CD4-positive, alpha-beta T cell (primary cell): ENCODE measurements at regions of chr14 and their contacts with region 1.

Region 1: GRCh38 chr14:91244501-91244901 is at the start of gene GPR68:
- DNase-seq: peak in 6 of 14 experiments; percentile 26 to 70 (median 58)
- ATAC-seq: no peak
- H3K4me3 ChIP-seq: peak within 1 kb of the TSS; percentile 65
- H3K4me3 Mint-ChIP-seq: peak within 1 kb of the TSS; percentile 90
- H3K27ac ChIP-seq: peak within 1 kb of the TSS; percentile 97
- H3K27ac Mint-ChIP-seq: peak within 1 kb of the TSS; percentile 85
- H3K4me1 ChIP-seq: peaks cover 91% of the 10 kb centered on the region
- H3K4me1 Mint-ChIP-seq: peaks cover 95% of the 10 kb centered on the region
- H3K27me3 ChIP-seq: no peaks in the 10 kb centered on the region
- H3K27me3 Mint-ChIP-seq: no peaks in the 10 kb centered on the region
- CTCF ChIP-seq: no peak
- total RNA-seq, gene GPR68: 2.8 to 2.9 TPM

Region 2: DNA sequence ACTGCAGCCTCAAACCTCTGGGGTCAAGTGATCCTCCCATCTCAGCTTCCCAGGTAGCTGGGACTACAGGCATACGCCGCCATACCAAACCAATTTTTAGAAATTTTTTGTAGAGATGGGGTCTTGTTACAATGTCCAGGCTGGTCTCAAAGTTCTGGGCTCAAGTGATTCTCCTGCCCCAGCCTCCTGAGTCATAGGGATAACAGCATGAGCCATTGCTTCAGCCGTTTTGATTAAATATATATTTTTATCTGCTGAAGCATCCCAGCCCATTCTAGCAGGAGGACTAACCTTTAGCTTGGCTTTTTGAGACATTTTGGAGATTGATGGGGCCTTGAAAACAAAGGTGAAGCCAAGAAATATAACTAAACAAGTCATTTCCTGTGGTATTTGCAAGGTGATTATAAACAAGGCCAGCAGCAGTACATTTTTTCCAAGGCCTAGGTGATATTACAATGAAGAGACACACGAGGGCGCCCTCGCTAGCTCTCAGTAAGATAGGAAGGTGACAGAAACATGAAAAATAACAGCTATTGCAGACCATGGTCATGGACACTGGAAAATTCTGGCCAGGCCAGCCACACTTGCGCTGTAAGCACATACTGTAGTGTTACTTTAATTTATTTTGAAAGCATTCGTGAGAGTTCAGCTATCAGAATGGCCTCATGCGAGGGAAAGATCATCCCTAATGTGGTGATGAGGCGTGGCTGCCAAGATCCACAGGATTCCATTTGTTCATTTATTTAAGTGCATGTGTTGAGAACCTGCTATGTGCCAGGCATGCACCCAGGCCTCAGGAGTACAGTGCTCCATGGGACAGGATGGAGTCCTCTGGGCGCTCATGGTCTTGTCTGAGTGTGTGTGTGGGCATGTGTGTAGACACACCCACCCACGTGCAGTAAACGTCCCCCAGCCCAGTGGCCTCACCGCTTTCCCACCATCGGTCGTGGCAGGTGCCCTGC is 67.1 kb before region 1 on chr14:
- CTCF ChIA-PET with region 1: interaction called, 16 read pairs
- POLR2A ChIA-PET with region 1: interaction called, 25 read pairs
- intact Hi-C with region 1: no loop called
- DNase-seq: peak; percentile 47 to 89 (median 58)
- ATAC-seq: peak; percentile 93
- H3K4me3 ChIP-seq: no peak overlapping the region
- H3K4me3 Mint-ChIP-seq: no peak overlapping the region
- H3K27ac ChIP-seq: peak overlapping the region in 1 of 2 donors; percentile 40
- H3K27ac Mint-ChIP-seq: peak overlapping the region; percentile 47
- H3K4me1 ChIP-seq: peaks cover 17% of the 10 kb centered on the region
- H3K4me1 Mint-ChIP-seq: peaks cover 17% of the 10 kb centered on the region
- H3K27me3 ChIP-seq: no peaks in the 10 kb centered on the region
- H3K27me3 Mint-ChIP-seq: no peaks in the 10 kb centered on the region
- CTCF ChIP-seq: peak; percentile 91

Region 3: GRCh38 chr14:91193069-91193468 is 51.4 kb before region 1 on chr14:
- CTCF ChIA-PET with region 1: interaction called, 8 read pairs
- POLR2A ChIA-PET with region 1: interaction called, 10 read pairs
- intact Hi-C with region 1: loop called in 1 of 2 experiments (anchors 5 kb)
- DNase-seq: no peak
- ATAC-seq: no peak
- H3K4me3 ChIP-seq: no peak overlapping the region
- H3K4me3 Mint-ChIP-seq: no peak overlapping the region
- H3K27ac ChIP-seq: no peak overlapping the region
- H3K27ac Mint-ChIP-seq: no peak overlapping the region
- H3K4me1 ChIP-seq: peaks cover 15% of the 10 kb centered on the region
- H3K4me1 Mint-ChIP-seq: peaks cover 17% of the 10 kb centered on the region
- H3K27me3 ChIP-seq: no peaks in the 10 kb centered on the region
- H3K27me3 Mint-ChIP-seq: no peaks in the 10 kb centered on the region
- CTCF ChIP-seq: no peak

Region 4: DNA sequence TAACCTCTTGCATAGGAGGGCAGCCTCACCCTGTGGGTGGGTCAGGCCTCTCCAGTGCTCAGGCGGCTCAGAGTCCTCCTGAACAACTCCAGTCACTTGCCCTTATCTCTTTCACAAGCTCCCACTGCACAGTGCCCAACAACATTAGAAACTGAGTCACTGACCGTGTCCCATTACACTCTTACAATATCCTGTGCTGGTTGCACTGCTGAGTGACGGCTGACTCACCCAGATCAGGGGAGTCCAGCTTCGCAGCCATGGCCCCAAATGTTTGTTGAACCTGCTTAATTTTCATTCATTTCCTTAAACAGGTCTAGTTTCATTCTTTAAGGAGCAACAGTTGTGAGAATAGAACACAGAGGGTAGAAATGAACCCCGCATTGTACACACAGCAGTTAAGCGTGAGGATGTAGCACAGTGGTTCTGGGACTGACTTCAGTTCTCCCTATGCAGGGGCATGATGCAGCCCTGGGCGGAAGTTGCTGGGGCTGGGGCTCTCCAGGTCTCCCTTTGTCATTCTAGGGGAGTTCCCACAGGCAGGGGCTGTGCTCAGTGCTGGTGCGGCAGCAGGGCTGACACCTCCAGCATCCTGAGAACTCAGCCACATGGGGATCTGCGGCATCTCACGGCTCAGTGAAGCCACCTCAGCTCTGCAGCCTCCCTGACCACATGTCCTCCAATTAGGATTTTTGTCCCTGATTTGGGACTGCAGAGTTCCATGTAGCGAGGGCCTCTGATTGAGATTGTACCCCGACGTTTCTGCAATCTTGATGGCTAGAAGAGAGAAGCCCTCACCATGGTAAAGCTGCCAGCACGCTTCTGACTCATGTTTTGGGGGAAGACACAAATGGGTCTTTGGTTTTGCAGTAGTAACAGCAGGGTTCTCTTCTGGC is 16.1 kb before region 1 on chr14:
- CTCF ChIA-PET with region 1: interaction called, 19 read pairs
- POLR2A ChIA-PET with region 1: interaction called, 187 read pairs
- intact Hi-C with region 1: loop called in 1 of 2 experiments (anchors 1 kb)
- DNase-seq: peak in 13 of 14 experiments; percentile 41 to 94 (median 60)
- ATAC-seq: peak; percentile 77
- H3K4me3 ChIP-seq: no peak overlapping the region
- H3K4me3 Mint-ChIP-seq: peak overlapping the region; percentile 13
- H3K27ac ChIP-seq: peak overlapping the region; percentile 58 to 76
- H3K27ac Mint-ChIP-seq: peak overlapping the region; percentile 88
- H3K4me1 ChIP-seq: peaks cover 96% of the 10 kb centered on the region
- H3K4me1 Mint-ChIP-seq: peaks cover 90% of the 10 kb centered on the region
- H3K27me3 ChIP-seq: no peaks in the 10 kb centered on the region
- H3K27me3 Mint-ChIP-seq: no peaks in the 10 kb centered on the region
- CTCF ChIP-seq: no peak

Region 5: GRCh38 chr14:91233936-91234790 is 10.3 kb before region 1 on chr14:
- CTCF ChIA-PET with region 1: interaction called, 19 read pairs
- POLR2A ChIA-PET with region 1: interaction called, 187 read pairs
- intact Hi-C with region 1: loop called in 1 of 2 experiments (anchors 1 kb)
- DNase-seq: no peak
- ATAC-seq: no peak
- H3K4me3 ChIP-seq: no peak overlapping the region
- H3K4me3 Mint-ChIP-seq: no peak overlapping the region
- H3K27ac ChIP-seq: no peak overlapping the region
- H3K27ac Mint-ChIP-seq: no peak overlapping the region
- H3K4me1 ChIP-seq: peaks cover 86% of the 10 kb centered on the region
- H3K4me1 Mint-ChIP-seq: peaks cover 71% of the 10 kb centered on the region
- H3K27me3 ChIP-seq: no peaks in the 10 kb centered on the region
- H3K27me3 Mint-ChIP-seq: no peaks in the 10 kb centered on the region
- CTCF ChIP-seq: no peak

Region 6: GRCh38 chr14:91264151-91265150 is 19.9 kb after region 1 on chr14:
- CTCF ChIA-PET with region 1: interaction called, 3 read pairs
- POLR2A ChIA-PET with region 1: interaction called, 178 read pairs
- intact Hi-C with region 1: no loop called
- DNase-seq: peak in 5 of 14 experiments; percentile 30 to 65 (median 48)
- ATAC-seq: peak; percentile 50
- H3K4me3 ChIP-seq: peak overlapping the region; percentile 37
- H3K4me3 Mint-ChIP-seq: peak overlapping the region; percentile 75
- H3K27ac ChIP-seq: peak overlapping the region in 1 of 2 donors; percentile 29
- H3K27ac Mint-ChIP-seq: peak overlapping the region; percentile 24
- H3K4me1 ChIP-seq: peaks cover 42% of the 10 kb centered on the region
- H3K4me1 Mint-ChIP-seq: peaks cover 58% of the 10 kb centered on the region
- H3K27me3 ChIP-seq: no peaks in the 10 kb centered on the region
- H3K27me3 Mint-ChIP-seq: no peaks in the 10 kb centered on the region
- CTCF ChIP-seq: no peak

Region 7: DNA sequence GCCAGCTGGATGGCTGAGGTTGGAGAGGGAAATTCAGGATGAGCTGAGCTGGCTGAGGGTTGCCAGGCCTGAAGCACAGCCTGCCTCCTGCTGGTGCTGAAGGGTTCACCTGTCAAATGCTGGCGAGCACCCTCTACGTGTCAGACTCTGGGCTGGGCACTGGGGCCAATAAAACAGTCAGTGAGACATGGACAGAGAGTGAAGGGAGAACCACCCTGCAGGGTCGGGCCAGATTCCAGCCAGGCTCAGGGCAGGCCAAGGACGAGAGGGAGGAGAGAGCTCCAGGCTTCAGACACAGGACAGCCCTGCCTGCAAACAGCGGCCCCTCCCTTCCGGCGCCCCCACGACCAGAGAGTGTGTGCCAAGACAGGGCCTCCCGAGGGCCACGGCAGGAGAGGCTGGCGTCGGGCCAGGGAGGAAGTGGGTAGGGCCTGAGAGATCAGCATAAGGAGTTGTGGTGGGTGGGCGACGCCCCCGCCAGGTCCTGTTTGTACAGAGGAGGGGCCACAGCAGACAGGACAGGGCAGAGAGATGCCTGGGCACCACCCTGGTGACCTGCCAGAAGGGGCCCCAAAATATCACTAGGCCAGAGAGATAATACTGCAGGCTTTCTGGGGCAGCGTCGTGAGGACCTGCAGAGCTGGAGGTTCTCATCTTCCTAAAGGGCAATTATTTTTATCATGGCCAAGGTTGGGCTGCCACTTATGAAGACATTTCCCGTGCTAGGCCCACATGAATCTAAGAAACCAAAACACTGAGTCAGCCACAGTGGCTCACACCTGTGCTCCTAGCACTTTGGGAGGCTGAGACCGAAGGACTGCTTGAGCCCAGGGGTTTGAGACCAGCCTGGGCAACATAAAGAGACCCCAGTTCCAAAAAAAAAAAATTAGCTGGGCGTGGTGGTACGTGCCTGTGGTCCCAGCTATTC is 73.1 kb after region 1 on chr14:
- CTCF ChIA-PET with region 1: interaction called, 3 read pairs
- POLR2A ChIA-PET with region 1: interaction called, 7 read pairs
- intact Hi-C with region 1: loop called in 1 of 2 experiments (anchors 2 kb)
- DNase-seq: peak; percentile 56 to 94 (median 85)
- ATAC-seq: peak; percentile 52
- H3K4me3 ChIP-seq: peak overlapping the region; percentile 1
- H3K4me3 Mint-ChIP-seq: peak overlapping the region; percentile 85
- H3K27ac ChIP-seq: peak overlapping the region; percentile 89 to 91
- H3K27ac Mint-ChIP-seq: peak overlapping the region; percentile 97
- H3K4me1 ChIP-seq: peaks cover 99% of the 10 kb centered on the region
- H3K4me1 Mint-ChIP-seq: peaks cover 77% of the 10 kb centered on the region
- H3K27me3 ChIP-seq: no peaks in the 10 kb centered on the region
- H3K27me3 Mint-ChIP-seq: no peaks in the 10 kb centered on the region
- CTCF ChIP-seq: peak; percentile 36